Natural killer cell (primary cell): ENCODE measurements at regions of chr1 and their contacts with region 1.

Region 1: DNA sequence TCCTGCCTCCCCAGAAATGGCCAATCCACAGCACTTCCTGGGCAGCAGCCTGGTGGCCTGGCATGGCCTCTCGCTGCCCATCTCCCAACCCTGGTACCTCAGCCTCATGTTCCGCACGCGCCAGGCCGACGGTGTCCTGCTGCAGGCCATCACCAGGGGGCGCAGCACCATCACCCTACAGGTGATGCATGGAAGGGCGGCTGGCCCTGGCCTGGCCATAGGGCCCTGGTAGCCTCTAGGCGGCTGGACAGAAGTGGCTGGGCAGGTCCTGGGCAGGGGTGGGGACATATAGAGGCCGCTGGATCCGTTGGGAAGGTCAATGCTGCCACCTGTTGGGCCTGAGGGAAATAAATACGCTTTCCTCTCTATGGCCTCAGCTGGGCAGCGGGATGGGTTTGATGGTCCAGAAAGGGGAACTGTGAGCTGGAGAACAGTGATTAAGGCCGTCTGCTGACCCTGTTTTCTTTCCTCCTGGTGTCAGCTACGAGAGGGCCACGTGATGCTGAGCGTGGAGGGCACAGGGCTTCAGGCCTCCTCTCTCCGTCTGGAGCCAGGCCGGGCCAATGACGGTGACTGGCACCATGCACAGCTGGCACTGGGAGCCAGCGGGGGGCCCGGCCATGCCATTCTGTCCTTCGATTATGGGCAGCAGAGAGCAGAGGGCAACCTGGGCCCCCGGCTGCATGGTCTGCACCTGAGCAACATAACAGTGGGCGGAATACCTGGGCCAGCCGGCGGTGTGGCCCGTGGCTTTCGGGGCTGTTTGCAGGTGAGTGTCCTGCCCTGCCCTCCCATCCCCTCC is 14.5 kb downstream of the CELSR2 start:
- DNase-seq: peak; percentile 64 to 86
- ATAC-seq: peak; percentile 79 to 97 (median 94)
- H3K4me3 ChIP-seq: no peak overlapping the region
- H3K4me3 Mint-ChIP-seq: no peak overlapping the region
- H3K27ac ChIP-seq: no peak overlapping the region
- H3K27ac Mint-ChIP-seq: no peak overlapping the region
- H3K4me1 ChIP-seq: peaks cover 7% of the 10 kb centered on the region
- H3K4me1 Mint-ChIP-seq: peaks cover 0 to 5% of the 10 kb centered on the region in 2 donors
- H3K27me3 ChIP-seq: no peaks in the 10 kb centered on the region
- H3K27me3 Mint-ChIP-seq: no peaks in the 10 kb centered on the region
- CTCF ChIP-seq: peak; percentile 78

Region 2: GRCh38 chr1:109298666-109299557 is 35.1 kb after region 1 on chr1:
- intact Hi-C with region 1: no loop called
- DNase-seq: no peak
- ATAC-seq: no peak
- H3K4me3 ChIP-seq: no peak overlapping the region
- H3K4me3 Mint-ChIP-seq: no peak overlapping the region
- H3K27ac ChIP-seq: no peak overlapping the region
- H3K27ac Mint-ChIP-seq: no peak overlapping the region
- H3K4me1 ChIP-seq: no peaks in the 10 kb centered on the region
- H3K4me1 Mint-ChIP-seq: no peaks in the 10 kb centered on the region
- H3K27me3 ChIP-seq: no peaks in the 10 kb centered on the region
- H3K27me3 Mint-ChIP-seq: peaks cover 11 to 34% of the 10 kb centered on the region in 2 donors
- CTCF ChIP-seq: no peak

Region 3: GRCh38 chr1:109385417-109385816 is 121.6 kb after region 1 on chr1:
- intact Hi-C with region 1: no loop called
- DNase-seq: no peak
- ATAC-seq: no peak
- H3K4me3 ChIP-seq: no peak overlapping the region
- H3K4me3 Mint-ChIP-seq: no peak overlapping the region
- H3K27ac ChIP-seq: no peak overlapping the region
- H3K27ac Mint-ChIP-seq: no peak overlapping the region
- H3K4me1 ChIP-seq: no peaks in the 10 kb centered on the region
- H3K4me1 Mint-ChIP-seq: no peaks in the 10 kb centered on the region
- H3K27me3 ChIP-seq: no peaks in the 10 kb centered on the region
- H3K27me3 Mint-ChIP-seq: peaks cover 9 to 19% of the 10 kb centered on the region in 2 donors
- CTCF ChIP-seq: no peak

Region 4: DNA sequence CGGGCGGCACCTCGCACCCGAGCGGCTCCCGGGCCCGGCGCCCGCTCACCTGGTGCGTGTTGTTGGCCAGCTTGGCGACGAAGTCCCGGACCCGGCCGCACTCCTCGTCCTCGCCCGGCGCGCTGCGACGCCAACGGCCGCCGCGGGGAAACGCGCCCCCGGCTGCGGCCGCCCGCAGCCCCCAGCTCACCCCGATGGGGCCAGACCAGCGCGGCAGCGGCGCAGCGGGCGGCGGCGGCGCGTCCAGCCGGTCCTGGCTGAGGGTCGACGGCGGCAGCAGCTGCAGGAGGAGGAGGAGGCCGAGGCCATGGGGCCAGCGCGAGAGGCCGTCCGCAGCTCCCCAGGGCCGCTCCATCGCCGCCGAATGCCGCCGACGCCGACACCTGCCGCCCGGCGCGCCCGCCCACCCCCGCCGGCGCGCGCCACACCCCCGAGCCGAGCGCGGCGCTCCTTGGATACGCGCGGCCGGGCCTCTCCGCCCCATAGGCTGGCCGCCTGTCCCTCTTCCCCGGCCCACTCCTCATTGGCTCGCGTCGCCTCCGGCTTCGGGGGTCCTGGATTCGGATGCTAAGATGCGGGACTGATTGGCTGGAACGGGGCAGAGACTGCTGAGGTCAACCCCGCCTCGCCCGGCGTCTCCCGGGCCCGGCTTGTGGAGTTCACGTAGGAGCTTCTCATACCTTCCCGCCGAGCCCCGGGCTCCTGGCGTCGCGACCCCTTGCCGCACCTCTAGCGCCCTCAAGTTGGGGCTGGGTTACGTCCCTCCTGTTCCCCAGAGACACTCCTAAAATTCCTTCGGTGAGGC is 133.9 kb after region 1 on chr1 and contains the start of gene SORT1:
- intact Hi-C with region 1: loop called (anchors 1 kb)
- DNase-seq: peak; percentile 50 to 74
- ATAC-seq: peak; percentile 92 to 98 (median 94)
- H3K4me3 ChIP-seq: peak within 1 kb of the TSS; percentile 37
- H3K4me3 Mint-ChIP-seq: peak within 1 kb of the TSS; percentile 92
- H3K27ac ChIP-seq: no peak within 1 kb of the TSS
- H3K27ac Mint-ChIP-seq: peak within 1 kb of the TSS in 1 of 2 donors; percentile 22
- H3K4me1 ChIP-seq: peaks cover 17% of the 10 kb centered on the region
- H3K4me1 Mint-ChIP-seq: peaks cover 13 to 17% of the 10 kb centered on the region in 2 donors
- H3K27me3 ChIP-seq: peaks cover 15% of the 10 kb centered on the region
- H3K27me3 Mint-ChIP-seq: peaks cover 25 to 33% of the 10 kb centered on the region in 2 donors
- CTCF ChIP-seq: no peak
- total RNA-seq, gene SORT1: 2.7 to 7.1 (median 3.7) TPM

Region 5: GRCh38 chr1:109493805-109494539 is 230.2 kb after region 1 on chr1 and contains the start of gene CYB561D1:
- intact Hi-C with region 1: loop called (anchors 5 kb)
- DNase-seq: peak; percentile 87 to 94
- ATAC-seq: peak; percentile 92 to 98 (median 93)
- H3K4me3 ChIP-seq: peak within 1 kb of the TSS; percentile 99
- H3K4me3 Mint-ChIP-seq: peak within 1 kb of the TSS; percentile 93
- H3K27ac ChIP-seq: peak within 1 kb of the TSS; percentile 65
- H3K27ac Mint-ChIP-seq: peak within 1 kb of the TSS; percentile 76 to 93
- H3K4me1 ChIP-seq: peaks cover 54% of the 10 kb centered on the region
- H3K4me1 Mint-ChIP-seq: peaks cover 13 to 35% of the 10 kb centered on the region in 2 donors
- H3K27me3 ChIP-seq: no peaks in the 10 kb centered on the region
- H3K27me3 Mint-ChIP-seq: no peaks in the 10 kb centered on the region
- CTCF ChIP-seq: peak; percentile 91
- total RNA-seq, gene CYB561D1: 21.1 to 36.0 (median 34.7) TPM